CD14-positive monocyte (primary cell): ENCODE measurements at regions of chr22 and their contacts with region 1.

Region 1: GRCh38 chr22:46079861-46080821 is 70.2 kb upstream of the PPARA start:
- DNase-seq: no peak
- H3K4me3 ChIP-seq: no peak overlapping the region
- H3K4me3 Mint-ChIP-seq: no peak overlapping the region
- H3K27ac ChIP-seq: no peak overlapping the region
- H3K27ac Mint-ChIP-seq: peak overlapping the region in 2 of 7 donors; percentile 73 to 80
- H3K4me1 ChIP-seq: peaks cover 0 to 2% of the 10 kb centered on the region in 2 donors
- H3K4me1 Mint-ChIP-seq: peaks cover 9% of the 10 kb centered on the region
- H3K27me3 ChIP-seq: no peaks in the 10 kb centered on the region
- H3K27me3 Mint-ChIP-seq: no peaks in the 10 kb centered on the region
- CTCF ChIP-seq: no peak

Region 2: GRCh38 chr22:46023558-46023981 is 56.6 kb before region 1 on chr22:
- intact Hi-C with region 1: no loop called
- DNase-seq: no peak
- H3K4me3 ChIP-seq: no peak overlapping the region
- H3K4me3 Mint-ChIP-seq: no peak overlapping the region
- H3K27ac ChIP-seq: no peak overlapping the region
- H3K27ac Mint-ChIP-seq: no peak overlapping the region
- H3K4me1 ChIP-seq: peaks cover 12 to 28% of the 10 kb centered on the region in 2 donors
- H3K4me1 Mint-ChIP-seq: peaks cover 19% of the 10 kb centered on the region
- H3K27me3 ChIP-seq: peaks cover 0 to 20% of the 10 kb centered on the region in 2 donors
- H3K27me3 Mint-ChIP-seq: peaks cover 17 to 30% (median 19%) of the 10 kb centered on the region in 3 donors
- CTCF ChIP-seq: no peak

Region 3: GRCh38 chr22:46110215-46110614 is 30.1 kb after region 1 on chr22:
- intact Hi-C with region 1: loop called in 1 of 2 experiments (anchors 5 kb)
- DNase-seq: no peak
- H3K4me3 ChIP-seq: no peak overlapping the region
- H3K4me3 Mint-ChIP-seq: no peak overlapping the region
- H3K27ac ChIP-seq: no peak overlapping the region
- H3K27ac Mint-ChIP-seq: no peak overlapping the region
- H3K4me1 ChIP-seq: no peaks in the 10 kb centered on the region
- H3K4me1 Mint-ChIP-seq: peaks cover 4% of the 10 kb centered on the region
- H3K27me3 ChIP-seq: no peaks in the 10 kb centered on the region
- H3K27me3 Mint-ChIP-seq: no peaks in the 10 kb centered on the region
- CTCF ChIP-seq: no peak